Activated naive CD4-positive, alpha-beta T cell treated with anti-CD3 and anti-CD28 coated beads for 36 hours (primary cell): ENCODE measurements at regions of chr16 and their contacts with region 1.

Region 1: DNA sequence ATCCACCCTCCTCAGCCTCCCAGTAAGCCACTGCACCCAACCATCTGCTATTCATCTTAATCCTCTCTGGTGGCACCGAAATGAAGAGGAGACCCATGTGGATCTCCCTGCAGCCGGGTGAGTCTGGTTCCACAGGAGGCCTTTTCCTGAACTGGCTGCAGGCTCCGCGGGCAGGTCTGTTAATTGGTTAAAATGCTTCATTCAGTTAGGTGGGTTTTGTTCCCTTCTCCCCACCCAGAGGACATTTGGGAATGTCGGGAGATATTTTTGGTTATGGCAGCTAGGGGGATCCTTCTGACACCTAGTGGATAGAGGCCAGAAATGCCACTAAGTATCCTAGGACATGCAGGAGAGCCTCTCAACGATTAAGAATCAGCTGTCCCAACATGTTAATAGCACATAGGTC is 16.7 kb downstream of the C16orf54 start:
- DNase-seq: no peak
- H3K4me3 Mint-ChIP-seq: no peak overlapping the region
- H3K27ac Mint-ChIP-seq: no peak overlapping the region
- H3K4me1 Mint-ChIP-seq: peaks cover 35% of the 10 kb centered on the region
- H3K27me3 Mint-ChIP-seq: no peaks in the 10 kb centered on the region

Region 2: GRCh38 chr16:29745853-29746345 is 16.8 kb after region 1 on chr16 and contains the start of gene C16orf54:
- CTCF ChIA-PET with region 1: interaction called, 7 read pairs
- intact Hi-C with region 1: loop called (anchors 2 kb)
- DNase-seq: peak; percentile 96
- H3K4me3 Mint-ChIP-seq: peak within 1 kb of the TSS; percentile 97
- H3K27ac Mint-ChIP-seq: peak within 1 kb of the TSS; percentile 97
- H3K4me1 Mint-ChIP-seq: peaks cover 65% of the 10 kb centered on the region
- H3K27me3 Mint-ChIP-seq: no peaks in the 10 kb centered on the region
- total RNA-seq, gene C16orf54: 11.4 to 12.1 TPM

Region 3: GRCh38 chr16:29774730-29775129 is 45.6 kb after region 1 on chr16:
- CTCF ChIA-PET with region 1: no interaction called
- intact Hi-C with region 1: no loop called
- DNase-seq: no peak
- H3K4me3 Mint-ChIP-seq: no peak overlapping the region
- H3K27ac Mint-ChIP-seq: no peak overlapping the region
- H3K4me1 Mint-ChIP-seq: peaks cover 4% of the 10 kb centered on the region
- H3K27me3 Mint-ChIP-seq: no peaks in the 10 kb centered on the region

Region 4: DNA sequence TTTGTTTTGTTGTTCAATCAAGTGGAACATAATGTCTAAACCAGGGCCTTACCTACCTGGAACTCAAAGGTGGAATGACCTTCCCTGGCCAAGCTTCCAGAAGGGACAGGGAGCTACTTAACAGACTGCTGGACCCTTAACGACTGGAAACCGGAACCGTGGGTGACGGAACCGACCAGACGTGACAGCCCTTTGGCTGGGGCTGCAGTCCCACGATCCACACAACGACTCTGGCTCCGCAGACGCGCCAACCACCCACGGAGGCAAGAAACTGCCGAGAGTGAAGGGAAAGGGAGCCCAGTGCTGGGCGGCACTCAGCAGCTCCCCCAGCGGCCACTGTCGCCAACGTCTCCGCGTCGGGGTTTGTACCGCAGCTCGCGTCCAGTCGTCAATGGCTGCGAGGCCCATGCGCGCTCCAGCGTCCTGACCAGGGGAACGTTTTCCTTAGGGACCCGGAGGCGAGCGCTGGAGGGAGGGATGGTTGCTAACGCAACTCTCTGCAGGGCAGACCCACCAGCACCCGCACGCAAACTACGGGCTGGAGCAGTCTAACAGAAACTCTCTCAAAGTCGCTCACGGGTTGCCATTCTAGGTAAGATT is 55.9 kb after region 1 on chr16:
- CTCF ChIA-PET with region 1: interaction called, 8 read pairs
- intact Hi-C with region 1: loop called (anchors 1 kb)
- DNase-seq: peak; percentile 82
- H3K4me3 Mint-ChIP-seq: peak overlapping the region; percentile 61
- H3K27ac Mint-ChIP-seq: no peak overlapping the region
- H3K4me1 Mint-ChIP-seq: peaks cover 25% of the 10 kb centered on the region
- H3K27me3 Mint-ChIP-seq: no peaks in the 10 kb centered on the region

Region 5: GRCh38 chr16:29790183-29790952 is 61.2 kb after region 1 on chr16 and contains the start of gene KIF22:
- CTCF ChIA-PET with region 1: interaction called, 5 read pairs
- intact Hi-C with region 1: loop called (anchors 1 kb)
- DNase-seq: peak; percentile 100
- H3K4me3 Mint-ChIP-seq: peak within 1 kb of the TSS; percentile 100
- H3K27ac Mint-ChIP-seq: peak within 1 kb of the TSS; percentile 98
- H3K4me1 Mint-ChIP-seq: peaks cover 35% of the 10 kb centered on the region
- H3K27me3 Mint-ChIP-seq: no peaks in the 10 kb centered on the region
- total RNA-seq, gene KIF22: 201 to 209 TPM

Region 6: DNA sequence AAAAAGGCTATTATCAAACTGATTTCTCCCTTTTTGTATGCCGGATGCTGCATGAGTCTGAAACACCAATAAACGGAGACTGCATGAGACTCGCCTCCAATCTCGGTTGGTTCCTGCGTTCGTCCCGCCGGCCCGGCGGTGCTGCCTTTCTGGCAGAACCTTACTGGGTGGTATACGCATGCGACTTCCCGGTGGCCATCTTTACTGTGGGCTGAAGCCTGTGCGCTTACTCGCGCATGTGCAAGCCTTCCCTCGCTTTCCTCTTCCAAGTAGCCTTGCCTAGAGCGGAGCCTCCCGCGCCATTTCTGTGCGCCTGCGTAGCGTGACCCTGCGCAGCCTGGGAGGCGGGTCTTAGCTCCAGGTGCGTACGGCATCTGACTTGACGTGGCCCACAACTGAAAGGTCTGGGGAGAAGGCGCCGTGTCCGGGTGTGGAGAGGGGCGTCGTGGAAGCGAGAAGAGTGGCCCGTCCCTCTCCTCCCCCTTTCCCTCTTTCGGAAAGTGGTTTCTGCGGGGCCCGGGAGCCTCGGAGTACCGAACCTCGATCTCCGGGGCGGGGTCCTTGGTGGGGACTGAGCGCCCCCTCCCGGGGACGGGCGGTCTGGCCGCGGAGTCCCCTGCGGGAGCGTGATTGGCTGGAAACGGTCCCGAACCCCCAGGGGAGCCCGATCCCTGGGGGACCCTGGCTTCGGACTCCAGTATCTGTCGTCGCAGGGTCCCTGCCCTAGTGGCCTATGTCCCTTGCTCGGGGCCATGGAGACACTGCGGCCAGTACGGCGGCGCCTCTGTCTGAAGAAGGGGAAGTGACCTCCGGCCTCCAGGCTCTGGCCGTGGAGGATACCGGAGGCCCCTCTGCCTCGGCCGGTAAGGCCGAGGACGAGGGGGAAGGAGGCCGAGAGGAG is 86.9 kb after region 1 on chr16 and contains the start of gene PAGR1:
- CTCF ChIA-PET with region 1: interaction called, 3 read pairs
- intact Hi-C with region 1: loop called (anchors 2 kb)
- DNase-seq: peak; percentile 99
- H3K4me3 Mint-ChIP-seq: peak within 1 kb of the TSS; percentile 93
- H3K27ac Mint-ChIP-seq: peak within 1 kb of the TSS; percentile 96
- H3K4me1 Mint-ChIP-seq: peaks cover 55% of the 10 kb centered on the region
- H3K27me3 Mint-ChIP-seq: no peaks in the 10 kb centered on the region
- total RNA-seq, gene PAGR1: 16.9 to 19.3 TPM

Region 7: DNA sequence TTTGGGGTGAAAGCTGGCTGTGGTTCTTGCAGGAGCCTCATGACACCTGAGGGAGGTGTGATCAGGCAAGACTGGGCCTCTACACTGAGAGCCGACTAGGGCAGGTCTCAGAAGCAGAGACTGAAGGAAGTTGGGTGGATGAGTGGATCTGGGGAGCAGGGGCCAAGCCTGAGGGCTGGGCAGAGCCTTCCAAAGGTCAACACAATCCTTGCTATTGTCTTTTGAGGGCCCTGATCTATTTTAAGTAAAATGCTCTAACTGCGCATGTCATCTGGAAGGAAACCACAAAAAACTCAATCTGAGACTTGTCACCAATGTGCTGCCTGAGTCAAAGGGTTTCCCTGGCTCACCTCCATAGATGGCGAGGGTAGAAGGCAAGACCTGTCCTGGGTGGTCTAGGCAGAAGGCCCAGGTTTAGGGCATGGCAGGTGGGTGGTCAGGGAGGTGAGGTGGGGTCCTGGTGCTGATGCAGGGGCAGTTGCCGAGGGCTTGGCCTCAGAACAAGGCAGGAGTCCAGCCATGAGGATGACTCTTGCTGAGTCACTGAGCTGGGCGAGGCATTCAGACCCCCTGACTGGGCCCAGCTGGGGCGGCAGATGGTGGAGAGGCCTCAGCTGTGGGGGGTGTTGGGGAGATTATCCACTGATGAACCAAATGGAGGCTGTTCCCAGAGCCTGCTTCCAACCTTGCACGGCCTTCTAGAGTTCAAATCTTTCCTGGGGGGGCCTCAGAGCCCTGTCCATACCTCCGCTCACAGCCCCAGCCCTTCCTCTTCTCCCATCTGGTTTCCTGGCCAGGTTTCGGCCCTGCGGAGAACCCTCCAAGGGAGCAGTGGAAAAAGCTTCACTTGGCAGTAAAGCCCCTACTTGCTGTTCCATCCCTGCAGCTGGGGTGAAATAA is 96.3 kb after region 1 on chr16:
- CTCF ChIA-PET with region 1: no interaction called
- intact Hi-C with region 1: loop called (anchors 1 kb)
- DNase-seq: peak; percentile 78
- H3K4me3 Mint-ChIP-seq: peak overlapping the region; percentile 55
- H3K27ac Mint-ChIP-seq: peak overlapping the region; percentile 90
- H3K4me1 Mint-ChIP-seq: peaks cover 81% of the 10 kb centered on the region
- H3K27me3 Mint-ChIP-seq: no peaks in the 10 kb centered on the region